ENCODE measurements at regions of chr9 and their contacts with region 1.

Region 1: GRCh38 chr9:19456996-19457692 is 48.3 kb downstream of the ACER2 start:
- DNase-seq: no peak
- H3K4me3 ChIP-seq: no peak overlapping the region
- H3K27ac ChIP-seq: peak overlapping the region; percentile 10
- H3K4me1 ChIP-seq: no peaks in the 10 kb centered on the region
- H3K27me3 ChIP-seq: no peaks in the 10 kb centered on the region
- CTCF ChIP-seq: peak; percentile 87 to 95 (median 88)
- POLR2A ChIP-seq: no peak

Region 2: GRCh38 chr9:19379697-19380046 is 77.5 kb before region 1 on chr9:
- intact Hi-C with region 1: loop called (anchors 2 kb)
- DNase-seq: no peak
- H3K4me3 ChIP-seq: peak overlapping the region; percentile 57 to 69
- H3K27ac ChIP-seq: peak overlapping the region; percentile 94
- H3K4me1 ChIP-seq: peaks cover 23% of the 10 kb centered on the region
- H3K27me3 ChIP-seq: no peaks in the 10 kb centered on the region
- CTCF ChIP-seq: no peak
- POLR2A ChIP-seq: no peak